H1 (cell line): ENCODE measurements at regions of chr2 and their contacts with region 1.

Region 1: DNA sequence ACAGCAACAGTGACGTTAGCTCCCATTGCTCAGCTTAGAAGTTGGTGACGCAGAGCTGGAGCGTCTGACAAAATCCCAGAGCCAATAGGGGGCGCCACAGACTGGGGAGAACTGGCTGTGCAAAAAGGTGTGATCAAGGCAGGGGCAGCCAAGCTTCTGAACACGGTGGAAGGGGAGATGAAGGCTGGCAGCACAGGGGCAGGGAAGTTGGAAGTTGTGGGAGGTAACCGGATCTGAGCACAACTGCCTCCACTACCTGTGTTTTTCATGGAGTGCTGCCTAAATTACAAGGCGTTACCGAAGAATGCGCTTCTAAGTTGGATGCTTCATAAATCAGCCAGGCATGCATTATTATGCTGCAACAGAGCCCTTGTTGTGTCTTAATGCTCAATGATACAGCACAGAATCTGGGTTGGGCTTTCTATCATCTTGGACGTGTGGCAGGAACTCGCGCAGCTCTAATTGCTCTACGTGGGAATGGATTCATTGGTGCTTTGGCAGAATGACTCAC is 370.0 kb downstream of the SLC4A3 start:
- DNase-seq: peak; percentile 27 to 94
- H3K4me3 ChIP-seq: no peak overlapping the region
- H3K27ac ChIP-seq: no peak overlapping the region
- H3K4me1 ChIP-seq: peaks cover 0 to 5% (median 4%) of the 10 kb centered on the region in 4 experiments; a peak in 3 of 7 replicates
- H3K27me3 ChIP-seq: no peaks in the 10 kb centered on the region
- CTCF ChIP-seq: peak; percentile 82 to 93 (median 85)
- EP300 ChIP-seq: no peak
- POLR2A ChIP-seq: no peak
- RAD21 ChIP-seq: peak; percentile 89 to 94

Region 2: DNA sequence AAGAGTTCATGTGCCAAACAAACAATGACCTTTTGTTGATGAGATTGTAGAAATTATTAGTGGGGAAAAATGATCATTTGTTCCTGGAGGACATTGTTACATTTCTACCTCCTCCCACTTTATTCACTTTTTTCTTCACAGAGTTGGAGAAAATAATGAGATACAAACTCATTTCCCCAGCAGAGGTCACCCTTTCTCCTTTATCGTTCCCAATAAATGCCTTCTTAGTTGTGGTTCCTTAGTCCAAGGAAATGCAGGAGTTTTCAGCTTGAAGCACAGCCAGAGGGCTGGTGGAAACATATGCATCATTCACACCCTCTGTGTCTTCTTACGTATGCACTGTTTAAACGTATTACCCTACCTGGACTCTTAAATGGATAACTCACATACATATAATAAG is 261.2 kb before region 1 on chr2:
- CTCF ChIA-PET with region 1: interaction called, 71 read pairs
- POLR2A ChIA-PET with region 1: no interaction called
- DNase-seq: no peak
- H3K4me3 ChIP-seq: no peak overlapping the region
- H3K27ac ChIP-seq: no peak overlapping the region
- H3K4me1 ChIP-seq: no peaks in the 10 kb centered on the region; a peak in 1 of 7 replicates
- H3K27me3 ChIP-seq: no peaks in the 10 kb centered on the region
- CTCF ChIP-seq: peak in 2 of 3 experiments; percentile 56 to 60; a peak in 3 of 4 replicates
- EP300 ChIP-seq: no peak
- POLR2A ChIP-seq: no peak
- RAD21 ChIP-seq: peak; percentile 88

Region 3: GRCh38 chr2:219744066-219744465 is 253.3 kb before region 1 on chr2:
- CTCF ChIA-PET with region 1: interaction called, 71 read pairs
- POLR2A ChIA-PET with region 1: no interaction called
- DNase-seq: no peak
- H3K4me3 ChIP-seq: no peak overlapping the region
- H3K27ac ChIP-seq: no peak overlapping the region
- H3K4me1 ChIP-seq: no peaks in the 10 kb centered on the region
- H3K27me3 ChIP-seq: no peaks in the 10 kb centered on the region; a peak in 1 of 7 replicates
- CTCF ChIP-seq: no peak
- EP300 ChIP-seq: no peak
- POLR2A ChIP-seq: no peak
- RAD21 ChIP-seq: no peak

Region 4: DNA sequence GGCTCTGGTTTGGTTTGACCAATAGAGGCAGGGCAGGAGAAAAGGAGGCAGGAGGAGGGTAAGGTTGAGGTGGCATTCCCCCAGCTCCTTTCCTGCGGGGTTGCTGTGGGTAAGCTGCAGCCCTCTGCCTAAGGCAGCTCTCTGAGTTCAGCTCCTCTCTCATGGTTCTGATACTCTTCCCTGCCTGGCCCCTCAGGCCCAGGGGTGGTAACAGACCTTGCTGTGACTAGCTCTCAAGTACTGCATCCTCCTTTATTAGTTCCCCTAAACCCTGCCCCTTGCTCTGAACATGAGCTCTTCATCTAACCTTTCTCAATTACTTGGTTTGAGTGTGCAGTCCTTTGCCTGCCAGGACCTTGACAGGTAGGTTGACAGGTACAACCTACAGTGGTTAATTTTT is 164.5 kb before region 1 on chr2:
- CTCF ChIA-PET with region 1: interaction called, 14 read pairs
- POLR2A ChIA-PET with region 1: no interaction called
- DNase-seq: no peak
- H3K4me3 ChIP-seq: no peak overlapping the region
- H3K27ac ChIP-seq: no peak overlapping the region
- H3K4me1 ChIP-seq: no peaks in the 10 kb centered on the region
- H3K27me3 ChIP-seq: no peaks in the 10 kb centered on the region
- CTCF ChIP-seq: no peak
- EP300 ChIP-seq: no peak
- POLR2A ChIP-seq: no peak
- RAD21 ChIP-seq: no peak

Region 5: DNA sequence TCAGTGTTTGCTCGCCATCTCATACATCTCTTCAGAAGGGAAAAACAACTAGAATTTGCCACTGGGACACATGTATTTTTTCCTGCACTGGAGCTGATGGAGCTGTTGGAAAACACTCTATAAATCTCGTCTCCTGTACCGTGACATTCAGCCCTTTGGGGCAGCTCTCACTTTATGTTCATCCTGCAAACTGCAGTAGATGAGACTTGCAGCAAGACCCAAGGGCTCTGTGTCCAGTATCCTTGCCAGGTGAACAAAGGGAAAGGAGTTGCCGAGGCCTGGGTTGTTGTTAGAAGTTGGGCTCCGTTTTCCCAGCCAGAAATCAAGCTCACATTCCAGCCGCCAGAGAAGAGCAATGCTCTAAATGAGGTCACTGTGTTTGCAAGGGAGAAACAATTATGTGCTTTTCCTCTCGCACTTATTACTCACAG is 84.9 kb before region 1 on chr2:
- CTCF ChIA-PET with region 1: interaction called, 16 read pairs
- POLR2A ChIA-PET with region 1: no interaction called
- DNase-seq: no peak
- H3K4me3 ChIP-seq: no peak overlapping the region
- H3K27ac ChIP-seq: no peak overlapping the region
- H3K4me1 ChIP-seq: no peaks in the 10 kb centered on the region
- H3K27me3 ChIP-seq: no peaks in the 10 kb centered on the region; a peak in 1 of 7 replicates
- CTCF ChIP-seq: no peak
- EP300 ChIP-seq: no peak
- POLR2A ChIP-seq: no peak
- RAD21 ChIP-seq: no peak

Region 6: DNA sequence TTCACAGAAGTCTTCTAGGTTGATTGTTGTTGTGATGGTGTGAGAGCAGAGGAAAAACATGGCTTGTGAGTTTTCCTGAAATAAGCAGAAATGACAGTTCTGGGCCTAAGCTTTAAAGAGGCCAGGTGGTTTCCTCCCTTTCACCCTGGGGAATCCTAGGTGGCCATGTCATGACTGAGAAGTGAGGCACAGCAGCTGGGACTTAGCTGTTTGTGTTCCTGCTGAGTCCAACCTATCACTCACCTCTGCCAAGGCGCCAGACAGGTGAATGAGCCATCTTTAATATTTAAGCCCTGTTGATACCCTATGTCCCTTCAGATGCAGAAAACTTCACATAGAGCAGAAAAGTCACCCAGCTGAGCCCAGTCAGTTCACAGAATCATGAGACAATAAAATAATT is 14.5 kb after region 1 on chr2:
- CTCF ChIA-PET with region 1: interaction called, 38 read pairs
- POLR2A ChIA-PET with region 1: no interaction called
- DNase-seq: no peak
- H3K4me3 ChIP-seq: no peak overlapping the region
- H3K27ac ChIP-seq: no peak overlapping the region
- H3K4me1 ChIP-seq: no peaks in the 10 kb centered on the region
- H3K27me3 ChIP-seq: no peaks in the 10 kb centered on the region
- CTCF ChIP-seq: no peak
- EP300 ChIP-seq: no peak
- POLR2A ChIP-seq: no peak
- RAD21 ChIP-seq: no peak

Region 7: GRCh38 chr2:220025207-220025606 is 27.8 kb after region 1 on chr2:
- CTCF ChIA-PET with region 1: interaction called, 26 read pairs
- POLR2A ChIA-PET with region 1: no interaction called
- DNase-seq: no peak
- H3K4me3 ChIP-seq: no peak overlapping the region
- H3K27ac ChIP-seq: no peak overlapping the region
- H3K4me1 ChIP-seq: no peaks in the 10 kb centered on the region
- H3K27me3 ChIP-seq: no peaks in the 10 kb centered on the region
- CTCF ChIP-seq: no peak
- EP300 ChIP-seq: no peak
- POLR2A ChIP-seq: no peak
- RAD21 ChIP-seq: no peak